ENCODE measurements at regions of chr10 and their contacts with region 1.

Region 1: DNA sequence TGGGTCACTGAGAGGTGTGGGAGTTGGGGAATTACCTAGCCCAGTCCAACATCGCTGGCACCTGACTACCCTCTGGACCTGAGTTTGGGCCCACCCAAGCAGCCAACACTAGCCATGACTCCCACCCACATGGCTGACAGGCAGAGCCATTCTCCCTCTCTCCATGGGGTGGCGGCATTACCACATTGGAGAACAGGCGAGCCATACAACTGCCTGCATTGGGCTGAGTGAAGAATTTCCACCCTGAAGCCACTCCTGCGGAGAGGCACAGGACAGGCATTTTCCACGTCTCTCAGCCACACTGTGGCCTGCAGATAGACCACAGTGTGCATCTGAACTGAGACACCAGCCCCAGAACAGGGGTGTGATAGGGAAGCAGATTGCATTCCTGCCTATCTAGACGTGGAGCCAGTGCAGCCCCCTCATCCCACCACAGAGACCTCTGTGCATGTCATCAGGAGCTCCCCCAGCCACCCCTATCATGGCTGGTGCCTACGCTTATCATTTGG is 58.2 kb upstream of the ANTXRL start:
- DNase-seq: peak; percentile 80
- ATAC-seq: peak; percentile 98
- H3K4me3 Mint-ChIP-seq: no peak overlapping the region
- H3K27ac Mint-ChIP-seq: no peak overlapping the region
- H3K4me1 Mint-ChIP-seq: peaks cover 8% of the 10 kb centered on the region
- H3K27me3 Mint-ChIP-seq: no peaks in the 10 kb centered on the region
- CTCF ChIP-seq: peak; percentile 54

Region 2: DNA sequence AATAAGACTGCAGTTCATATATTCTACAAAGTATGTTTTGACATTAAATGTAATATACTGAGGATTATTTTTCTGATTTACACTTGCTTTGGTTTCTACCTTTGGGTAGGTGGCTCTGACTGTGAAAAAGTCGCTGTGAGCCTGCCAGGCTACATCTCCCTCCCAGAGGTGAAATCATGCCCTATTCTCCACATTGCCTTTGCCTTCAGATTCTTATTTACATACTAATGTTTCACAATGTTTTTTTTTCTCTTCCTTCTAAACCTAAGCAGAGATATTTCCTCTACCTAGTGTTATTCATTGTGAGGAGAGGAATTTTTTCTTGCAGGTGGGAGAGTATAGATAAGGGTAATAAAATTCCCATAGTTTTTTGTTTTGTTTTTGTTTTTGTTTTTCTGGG is 53.3 kb before region 1 on chr10:
- CTCF ChIA-PET with region 1: no interaction called
- POLR2A ChIA-PET with region 1: no interaction called
- intact Hi-C with region 1: no loop called
- DNase-seq: no peak
- ATAC-seq: no peak
- H3K4me3 Mint-ChIP-seq: no peak overlapping the region
- H3K27ac Mint-ChIP-seq: no peak overlapping the region
- H3K4me1 Mint-ChIP-seq: no peaks in the 10 kb centered on the region
- H3K27me3 Mint-ChIP-seq: no peaks in the 10 kb centered on the region
- CTCF ChIP-seq: no peak

Region 3: DNA sequence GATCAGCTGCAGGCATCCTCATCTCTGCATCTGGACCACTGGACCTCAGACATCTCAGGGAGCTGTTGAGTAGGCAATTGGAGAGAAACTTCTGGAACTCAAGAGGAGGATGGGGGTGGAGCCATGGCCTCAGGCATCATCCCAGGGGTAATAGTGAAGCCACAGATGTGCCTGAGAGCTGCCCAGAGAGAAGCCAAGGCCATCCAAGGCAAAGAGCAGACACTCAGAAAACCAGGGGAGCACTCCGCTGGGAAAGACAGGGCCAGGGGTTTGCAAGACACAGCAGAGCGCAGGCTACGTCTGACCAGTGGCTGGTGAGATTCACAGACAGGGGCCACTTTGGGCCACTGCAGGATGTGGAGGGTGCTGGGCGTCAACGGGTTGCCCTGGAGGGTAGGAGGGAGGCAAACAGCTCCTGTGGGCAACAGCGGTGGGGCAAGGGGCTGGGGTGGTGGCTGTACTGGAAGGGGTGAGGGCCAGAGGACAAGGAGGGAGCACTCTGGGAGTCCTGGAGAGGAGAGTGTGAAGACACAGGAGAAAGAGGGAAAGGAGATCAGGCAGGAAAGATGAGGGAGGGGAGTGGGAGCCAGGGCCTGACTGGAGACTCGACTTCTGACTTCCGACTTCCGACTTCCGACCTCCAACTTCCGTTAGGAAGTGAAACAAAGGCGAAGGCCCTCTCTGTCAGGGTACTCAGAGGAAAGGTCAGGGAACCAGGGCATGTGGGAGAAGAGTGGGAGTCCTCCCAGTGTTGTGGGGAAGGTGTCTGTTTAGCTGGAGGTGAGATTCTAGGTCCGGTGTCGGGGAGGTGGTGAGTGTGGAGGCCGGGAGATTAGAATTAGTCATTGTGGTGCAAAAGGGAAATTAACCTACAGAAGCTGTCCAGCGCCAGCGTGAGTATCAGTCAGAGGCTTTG is 11.5 kb before region 1 on chr10:
- CTCF ChIA-PET with region 1: interaction called, 16 read pairs
- POLR2A ChIA-PET with region 1: interaction called, 3 read pairs
- intact Hi-C with region 1: no loop called
- DNase-seq: no peak
- ATAC-seq: peak; percentile 55
- H3K4me3 Mint-ChIP-seq: no peak overlapping the region
- H3K27ac Mint-ChIP-seq: no peak overlapping the region
- H3K4me1 Mint-ChIP-seq: peaks cover 8% of the 10 kb centered on the region
- H3K27me3 Mint-ChIP-seq: no peaks in the 10 kb centered on the region
- CTCF ChIP-seq: no peak

Region 4: DNA sequence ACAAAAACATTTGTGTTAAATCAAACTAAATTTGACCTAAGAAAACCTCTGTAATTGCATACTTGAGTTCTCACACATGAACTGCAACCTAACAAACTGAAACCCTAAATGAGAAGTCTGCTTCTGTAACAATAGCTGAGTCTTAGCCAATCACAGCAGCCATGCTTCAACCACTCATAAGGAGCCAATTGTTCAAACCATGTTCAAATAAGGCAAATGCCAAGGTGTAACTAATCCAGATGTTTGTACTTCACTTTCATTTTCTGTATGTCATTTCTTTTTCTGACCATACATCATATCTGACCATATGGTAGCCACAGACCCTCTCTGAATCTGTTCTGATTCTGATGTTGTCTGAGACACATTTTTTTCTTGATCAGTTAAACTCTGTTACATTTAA is 10.6 kb after region 1 on chr10:
- CTCF ChIA-PET with region 1: interaction called, 16 read pairs
- POLR2A ChIA-PET with region 1: no interaction called
- intact Hi-C with region 1: no loop called
- DNase-seq: no peak
- ATAC-seq: peak; percentile 75
- H3K4me3 Mint-ChIP-seq: no peak overlapping the region
- H3K27ac Mint-ChIP-seq: peak overlapping the region; percentile 58
- H3K4me1 Mint-ChIP-seq: peaks cover 35% of the 10 kb centered on the region
- H3K27me3 Mint-ChIP-seq: no peaks in the 10 kb centered on the region
- CTCF ChIP-seq: no peak

Region 5: DNA sequence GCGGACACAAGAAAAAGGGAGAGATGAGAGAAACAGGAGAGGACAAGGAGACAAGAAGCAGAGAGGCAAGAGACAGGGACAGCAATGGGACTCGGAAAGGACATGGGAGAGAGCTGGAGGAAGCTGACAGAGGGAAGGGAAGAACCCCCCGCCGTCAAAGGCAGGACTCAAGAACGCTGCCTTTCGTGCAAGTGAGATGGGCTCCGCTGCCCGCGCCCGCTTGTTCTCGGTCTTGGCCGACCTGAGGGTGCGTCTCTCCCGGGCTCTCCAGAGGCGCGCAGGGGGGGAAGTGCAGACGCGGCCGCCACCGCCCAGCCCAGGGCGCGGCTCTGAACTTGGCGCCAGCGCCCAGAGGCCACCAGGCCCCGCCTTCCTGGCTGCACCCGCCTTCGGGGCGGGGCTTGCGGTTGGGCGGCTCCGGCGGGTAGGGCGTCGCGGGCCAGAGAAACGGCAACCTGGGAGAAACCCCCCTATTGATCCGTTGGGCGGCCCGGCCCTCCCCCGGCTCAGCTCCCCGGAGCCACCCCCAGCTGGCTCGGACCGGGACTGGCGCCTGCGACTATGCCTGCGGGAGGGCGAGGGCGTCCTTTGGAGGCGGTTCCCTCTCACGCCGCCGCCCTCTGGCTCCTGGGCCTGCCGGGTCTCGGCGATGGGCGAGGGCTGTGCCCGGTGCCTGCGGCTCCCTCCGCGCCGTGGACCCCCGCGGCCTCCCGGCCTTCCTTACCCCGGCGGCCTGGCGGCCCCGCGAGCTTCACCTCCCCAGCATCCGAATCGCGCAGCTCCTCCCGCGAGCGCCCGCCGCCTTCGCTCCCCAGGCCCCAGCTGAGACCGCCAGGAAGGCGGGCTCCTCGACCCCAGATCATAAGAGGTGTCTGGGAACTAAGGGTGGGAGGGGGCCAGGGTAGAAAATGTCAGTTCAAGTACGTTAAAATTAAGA is 55.9 kb after region 1 on chr10:
- CTCF ChIA-PET with region 1: interaction called, 12 read pairs
- POLR2A ChIA-PET with region 1: no interaction called
- intact Hi-C with region 1: no loop called
- DNase-seq: peak; percentile 73
- ATAC-seq: peak; percentile 86
- H3K4me3 Mint-ChIP-seq: peak overlapping the region; percentile 87
- H3K27ac Mint-ChIP-seq: peak overlapping the region; percentile 85
- H3K4me1 Mint-ChIP-seq: peaks cover 21% of the 10 kb centered on the region
- H3K27me3 Mint-ChIP-seq: peaks cover 12% of the 10 kb centered on the region
- CTCF ChIP-seq: no peak

Region 6: DNA sequence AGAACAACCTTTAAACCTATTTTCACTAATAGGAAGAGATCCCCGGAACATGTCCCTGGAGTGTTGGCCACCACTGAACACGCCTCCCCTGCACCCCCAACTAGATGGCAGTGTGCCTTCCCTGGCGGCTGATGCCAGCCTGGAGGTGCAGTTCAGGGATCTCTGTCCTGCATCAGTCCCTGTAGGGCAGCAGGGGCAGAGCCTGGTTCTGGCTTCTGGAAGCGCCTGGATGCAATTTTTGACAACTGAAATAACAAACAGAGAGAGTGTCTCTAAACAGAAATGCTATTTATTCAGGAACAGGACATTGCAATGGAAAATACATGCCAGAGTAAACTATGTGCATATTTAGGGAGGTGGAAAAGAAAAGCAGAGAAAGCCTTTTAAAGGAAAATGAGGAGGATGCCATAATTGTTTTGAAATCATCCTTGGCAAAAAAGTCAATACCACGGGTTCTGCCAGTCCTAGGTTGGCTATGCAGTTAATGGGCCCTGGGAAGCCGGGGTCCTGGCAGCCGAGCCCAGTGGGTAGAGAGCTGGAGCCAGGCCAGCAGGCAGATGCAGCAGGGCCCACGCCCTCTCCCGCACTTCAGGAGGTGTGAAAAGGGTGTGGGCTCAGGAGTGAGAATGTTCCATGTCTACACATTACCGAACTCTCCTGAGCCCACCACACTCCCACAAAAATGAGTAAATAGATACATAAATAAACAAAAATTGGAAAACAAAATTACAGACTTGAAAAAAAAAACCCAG is 76.6 kb after region 1 on chr10:
- CTCF ChIA-PET with region 1: no interaction called
- POLR2A ChIA-PET with region 1: no interaction called
- intact Hi-C with region 1: no loop called
- DNase-seq: no peak
- ATAC-seq: no peak
- H3K4me3 Mint-ChIP-seq: no peak overlapping the region
- H3K27ac Mint-ChIP-seq: no peak overlapping the region
- H3K4me1 Mint-ChIP-seq: no peaks in the 10 kb centered on the region
- H3K27me3 Mint-ChIP-seq: no peaks in the 10 kb centered on the region
- CTCF ChIP-seq: no peak

Region 7: DNA sequence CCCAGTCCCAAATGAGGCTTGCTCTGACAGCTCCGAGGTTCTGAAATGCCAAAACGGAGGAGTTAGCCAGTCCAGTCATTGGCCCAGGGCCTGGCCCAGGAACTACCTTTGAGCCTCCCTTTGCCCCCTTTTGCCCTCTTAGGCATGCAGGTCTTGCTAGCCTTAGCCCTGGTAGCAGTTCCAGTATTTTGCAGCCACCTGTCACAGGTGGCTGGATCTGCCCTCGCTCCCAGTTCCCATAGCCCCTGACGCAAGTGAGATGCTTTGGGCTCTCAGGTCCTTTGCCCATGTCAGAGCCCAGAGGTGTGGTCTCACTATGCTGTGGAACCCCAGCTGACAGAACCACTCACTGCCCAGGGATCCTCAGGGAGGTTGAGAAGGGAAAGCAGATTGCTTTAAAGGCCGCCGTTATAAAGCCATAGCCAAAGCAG is 285.8 kb after region 1 on chr10:
- CTCF ChIA-PET with region 1: no interaction called
- POLR2A ChIA-PET with region 1: no interaction called
- intact Hi-C with region 1: no loop called
- DNase-seq: no peak
- ATAC-seq: no peak
- H3K4me3 Mint-ChIP-seq: no peak overlapping the region
- H3K27ac Mint-ChIP-seq: no peak overlapping the region
- H3K4me1 Mint-ChIP-seq: no peaks in the 10 kb centered on the region
- H3K27me3 Mint-ChIP-seq: no peaks in the 10 kb centered on the region
- CTCF ChIP-seq: no peak